H1 (cell line): ENCODE measurements at regions of chr19 and their contacts with region 1.

Region 1: GRCh38 chr19:17739121-17739875 is 12.0 kb upstream of the FCHO1 start:
- DNase-seq: no peak
- H3K4me3 ChIP-seq: no peak overlapping the region
- H3K27ac ChIP-seq: no peak overlapping the region
- H3K4me1 ChIP-seq: peaks cover 0 to 3% (median 2%) of the 10 kb centered on the region in 4 experiments; a peak in 4 of 7 replicates
- H3K27me3 ChIP-seq: no peaks in the 10 kb centered on the region
- CTCF ChIP-seq: no peak
- EP300 ChIP-seq: no peak
- POLR2A ChIP-seq: no peak
- RAD21 ChIP-seq: no peak

Region 2: GRCh38 chr19:17725422-17726078 is 13.7 kb before region 1 on chr19:
- CTCF ChIA-PET with region 1: interaction called, 78 read pairs
- POLR2A ChIA-PET with region 1: interaction called, 8 read pairs
- DNase-seq: peak in 1 of 2 experiments; percentile 86
- H3K4me3 ChIP-seq: no peak overlapping the region
- H3K27ac ChIP-seq: no peak overlapping the region
- H3K4me1 ChIP-seq: peaks cover 0 to 1% (median under 1%) of the 10 kb centered on the region in 4 experiments; a peak in 3 of 7 replicates
- H3K27me3 ChIP-seq: no peaks in the 10 kb centered on the region
- CTCF ChIP-seq: peak; percentile 85 to 89 (median 89)
- EP300 ChIP-seq: no peak
- POLR2A ChIP-seq: no peak
- RAD21 ChIP-seq: peak; percentile 73 to 88